Cardiac septum (tissue), 1 donor: ENCODE measurements at regions of chr6 and their contacts with region 1.

Region 1: GRCh38 chr6:83221889-83222479 is 28.8 kb downstream of the RWDD2A start:
- DNase-seq: no peak

Region 2: GRCh38 chr6:82988904-82989303 is 233.1 kb before region 1 on chr6:
- intact Hi-C with region 1: no loop called
- DNase-seq: no peak

Region 3: GRCh38 chr6:83514866-83515466 is 293.0 kb after region 1 on chr6:
- intact Hi-C with region 1: loop called (anchors 2 kb)
- DNase-seq: no peak